Activated B cell treated with CpG ODN at 0.5 μM for 24 hours (primary cell): ENCODE measurements at regions of chr5 and their contacts with region 1.

Region 1: GRCh38 chr5:32489791-32490582 is 45.4 kb upstream of the ZFR start:
- DNase-seq: peak; percentile 49
- ATAC-seq: peak; percentile 71
- H3K4me3 Mint-ChIP-seq: no peak overlapping the region
- H3K27ac Mint-ChIP-seq: no peak overlapping the region
- H3K4me1 Mint-ChIP-seq: peaks cover 5% of the 10 kb centered on the region
- H3K27me3 Mint-ChIP-seq: peaks cover 8% of the 10 kb centered on the region
- CTCF ChIP-seq: peak; percentile 63

Region 2: GRCh38 chr5:32232441-32233219 is 257.4 kb before region 1 on chr5:
- CTCF ChIA-PET with region 1: interaction called, 6 read pairs
- POLR2A ChIA-PET with region 1: no interaction called
- intact Hi-C with region 1: loop called (anchors 1 kb)
- DNase-seq: peak; percentile 62
- ATAC-seq: peak; percentile 87
- H3K4me3 Mint-ChIP-seq: no peak overlapping the region
- H3K27ac Mint-ChIP-seq: peak overlapping the region; percentile 10
- H3K4me1 Mint-ChIP-seq: peaks cover 21% of the 10 kb centered on the region
- H3K27me3 Mint-ChIP-seq: no peaks in the 10 kb centered on the region
- CTCF ChIP-seq: no peak

Region 3: GRCh38 chr5:32444431-32445286 is 45.3 kb before region 1 on chr5 and contains the start of gene ZFR:
- CTCF ChIA-PET with region 1: no interaction called
- POLR2A ChIA-PET with region 1: interaction called, 3 read pairs
- intact Hi-C with region 1: loop called (anchors 5 kb)
- DNase-seq: peak; percentile 90
- ATAC-seq: peak; percentile 85
- H3K4me3 Mint-ChIP-seq: peak within 1 kb of the TSS; percentile 92
- H3K27ac Mint-ChIP-seq: peak within 1 kb of the TSS; percentile 92
- H3K4me1 Mint-ChIP-seq: peaks cover 60% of the 10 kb centered on the region
- H3K27me3 Mint-ChIP-seq: no peaks in the 10 kb centered on the region
- CTCF ChIP-seq: no peak
- total RNA-seq, gene ZFR: 60.2 and 64.3 TPM in 2 replicates

Region 4: GRCh38 chr5:32538031-32538547 is 48.1 kb after region 1 on chr5:
- CTCF ChIA-PET with region 1: interaction called, 3 read pairs
- POLR2A ChIA-PET with region 1: no interaction called
- intact Hi-C with region 1: loop called (anchors 5 kb)
- DNase-seq: peak; percentile 33
- ATAC-seq: peak; percentile 93
- H3K4me3 Mint-ChIP-seq: peak overlapping the region; percentile 56
- H3K27ac Mint-ChIP-seq: peak overlapping the region; percentile 81
- H3K4me1 Mint-ChIP-seq: peaks cover 70% of the 10 kb centered on the region
- H3K27me3 Mint-ChIP-seq: no peaks in the 10 kb centered on the region
- CTCF ChIP-seq: no peak

Region 5: GRCh38 chr5:32565145-32565544 is 75.2 kb after region 1 on chr5:
- CTCF ChIA-PET with region 1: interaction called, 3 read pairs
- POLR2A ChIA-PET with region 1: interaction called, 10 read pairs
- intact Hi-C with region 1: loop called (anchors 5 kb)
- DNase-seq: no peak
- ATAC-seq: no peak
- H3K4me3 Mint-ChIP-seq: no peak overlapping the region
- H3K27ac Mint-ChIP-seq: no peak overlapping the region
- H3K4me1 Mint-ChIP-seq: peaks cover 5% of the 10 kb centered on the region
- H3K27me3 Mint-ChIP-seq: no peaks in the 10 kb centered on the region
- CTCF ChIP-seq: no peak

Region 6: GRCh38 chr5:32572778-32573480 is 82.9 kb after region 1 on chr5:
- CTCF ChIA-PET with region 1: interaction called, 5 read pairs
- POLR2A ChIA-PET with region 1: no interaction called
- intact Hi-C with region 1: loop called (anchors 5 kb)
- DNase-seq: no peak
- ATAC-seq: peak; percentile 91
- H3K4me3 Mint-ChIP-seq: peak overlapping the region; percentile 44
- H3K27ac Mint-ChIP-seq: peak overlapping the region; percentile 68
- H3K4me1 Mint-ChIP-seq: peaks cover 34% of the 10 kb centered on the region
- H3K27me3 Mint-ChIP-seq: no peaks in the 10 kb centered on the region
- CTCF ChIP-seq: no peak

Region 7: GRCh38 chr5:32613050-32613672 is 123.2 kb after region 1 on chr5:
- CTCF ChIA-PET with region 1: interaction called, 35 read pairs
- POLR2A ChIA-PET with region 1: no interaction called
- intact Hi-C with region 1: loop called (anchors 1 kb)
- DNase-seq: peak; percentile 66
- ATAC-seq: peak; percentile 76
- H3K4me3 Mint-ChIP-seq: no peak overlapping the region
- H3K27ac Mint-ChIP-seq: no peak overlapping the region
- H3K4me1 Mint-ChIP-seq: peaks cover 2% of the 10 kb centered on the region
- H3K27me3 Mint-ChIP-seq: no peaks in the 10 kb centered on the region
- CTCF ChIP-seq: peak; percentile 53